ENCODE measurements at regions of chr5 and their contacts with region 1.

Region 1: DNA sequence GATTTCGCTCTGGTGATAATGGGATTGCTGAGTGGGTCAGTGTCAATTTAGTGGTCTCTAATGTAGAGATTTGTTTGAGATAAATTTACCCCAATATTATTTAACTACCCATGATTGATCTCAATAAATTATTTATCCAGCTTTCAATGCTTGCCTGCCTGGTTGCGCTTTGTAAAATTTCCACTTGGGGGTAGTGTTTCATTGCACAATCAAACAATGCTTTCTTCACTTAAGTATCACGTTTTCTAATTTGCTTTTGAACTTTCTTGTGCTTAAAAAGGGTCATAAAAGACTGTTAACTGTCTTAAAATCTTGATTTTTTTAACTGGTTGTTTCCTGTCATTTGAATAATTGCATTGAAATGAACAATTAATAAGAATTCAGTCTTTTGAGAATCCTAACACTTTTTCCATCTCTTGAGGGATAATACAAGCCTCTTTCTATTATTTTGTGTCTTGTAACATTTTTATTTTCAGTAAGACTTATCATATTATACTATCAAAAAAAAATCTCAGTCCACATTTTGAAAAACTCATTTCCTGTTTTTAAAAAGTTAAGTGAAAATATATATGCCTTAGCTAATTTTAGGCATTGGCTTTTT is 18.7 kb downstream of the HSD17B4 start:
- DNase-seq: peak; percentile 27
- ATAC-seq: no peak
- H3K4me3 ChIP-seq: no peak overlapping the region
- H3K4me3 Mint-ChIP-seq: peak overlapping the region; percentile 10
- H3K27ac ChIP-seq: peak overlapping the region in 1 of 2 donors; percentile 41
- H3K27ac Mint-ChIP-seq: peak overlapping the region; percentile 53
- H3K4me1 ChIP-seq: peaks cover 10 to 14% of the 10 kb centered on the region in 2 donors
- H3K4me1 Mint-ChIP-seq: peaks cover 28% of the 10 kb centered on the region
- H3K27me3 ChIP-seq: no peaks in the 10 kb centered on the region
- H3K27me3 Mint-ChIP-seq: no peaks in the 10 kb centered on the region
- CTCF ChIP-seq: peak; percentile 69

Region 2: GRCh38 chr5:119386596-119387344 is 84.2 kb before region 1 on chr5:
- CTCF ChIA-PET with region 1: no interaction called
- POLR2A ChIA-PET with region 1: no interaction called
- intact Hi-C with region 1: no loop called
- DNase-seq: no peak
- ATAC-seq: no peak
- H3K4me3 ChIP-seq: no peak overlapping the region
- H3K4me3 Mint-ChIP-seq: no peak overlapping the region
- H3K27ac ChIP-seq: peak overlapping the region; percentile 33 to 71
- H3K27ac Mint-ChIP-seq: peak overlapping the region; percentile 64
- H3K4me1 ChIP-seq: peaks cover 82 to 90% of the 10 kb centered on the region in 2 donors
- H3K4me1 Mint-ChIP-seq: peaks cover 91% of the 10 kb centered on the region
- H3K27me3 ChIP-seq: no peaks in the 10 kb centered on the region
- H3K27me3 Mint-ChIP-seq: no peaks in the 10 kb centered on the region
- CTCF ChIP-seq: no peak

Region 3: DNA sequence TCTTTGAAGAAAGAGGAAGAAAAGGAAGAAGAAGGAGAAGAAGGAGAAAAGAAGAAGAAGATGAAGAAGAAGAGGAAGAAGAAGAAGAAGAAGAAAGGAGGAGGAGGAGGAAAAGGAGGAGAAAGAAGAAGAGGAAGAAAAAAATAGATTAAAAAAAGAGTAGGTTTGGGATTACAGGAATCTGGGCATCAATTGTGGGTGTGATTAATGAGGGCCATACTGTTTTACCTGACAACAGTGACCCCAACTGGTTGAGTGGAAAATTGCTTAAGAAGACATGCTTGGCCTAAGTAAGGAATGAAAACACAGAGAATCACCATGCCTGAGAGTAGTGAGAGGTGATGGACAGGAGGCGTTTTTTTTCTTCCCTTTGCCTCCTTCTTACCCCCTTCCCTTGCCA is 273.0 kb after region 1 on chr5:
- CTCF ChIA-PET with region 1: no interaction called
- POLR2A ChIA-PET with region 1: no interaction called
- intact Hi-C with region 1: loop called (anchors 2 kb)
- DNase-seq: peak; percentile 55
- ATAC-seq: peak; percentile 43
- H3K4me3 ChIP-seq: no peak overlapping the region
- H3K4me3 Mint-ChIP-seq: no peak overlapping the region
- H3K27ac ChIP-seq: no peak overlapping the region
- H3K27ac Mint-ChIP-seq: no peak overlapping the region
- H3K4me1 ChIP-seq: no peaks in the 10 kb centered on the region
- H3K4me1 Mint-ChIP-seq: no peaks in the 10 kb centered on the region
- H3K27me3 ChIP-seq: peaks cover 0 to 5% (median 2%) of the 10 kb centered on the region in 4 experiments
- H3K27me3 Mint-ChIP-seq: peaks cover 5% of the 10 kb centered on the region
- CTCF ChIP-seq: peak; percentile 72

Measured in B cell (primary cell).